GM12878 (cell line): ENCODE measurements at regions of chr1 and their contacts with region 1.

Region 1: GRCh38 chr1:90220941-90221693 is 226.2 kb downstream of the ZNF326 start:
- DNase-seq: no peak
- ATAC-seq: peak; percentile 49
- H3K4me3 ChIP-seq: no peak overlapping the region
- H3K27ac ChIP-seq: no peak overlapping the region
- H3K4me1 ChIP-seq: no peaks in the 10 kb centered on the region
- H3K27me3 ChIP-seq: no peaks in the 10 kb centered on the region
- CTCF ChIP-seq: no peak
- EP300 ChIP-seq: no peak
- POLR2A ChIP-seq: no peak
- RAD21 ChIP-seq: no peak

Region 2: GRCh38 chr1:90206260-90206659 is 14.9 kb before region 1 on chr1:
- CTCF ChIA-PET with region 1: no interaction called
- POLR2A ChIA-PET with region 1: no interaction called
- RAD21 ChIA-PET with region 1: interaction called, 4 read pairs
- SMC1A ChIA-PET with region 1: interaction called, 16 read pairs
- in situ Hi-C with region 1: no loop called
- intact Hi-C with region 1: no loop called
- DNase-seq: no peak
- ATAC-seq: no peak
- H3K4me3 ChIP-seq: no peak overlapping the region
- H3K27ac ChIP-seq: no peak overlapping the region
- H3K4me1 ChIP-seq: no peaks in the 10 kb centered on the region
- H3K27me3 ChIP-seq: no peaks in the 10 kb centered on the region
- CTCF ChIP-seq: no peak
- EP300 ChIP-seq: no peak
- POLR2A ChIP-seq: no peak
- RAD21 ChIP-seq: no peak

Region 3: GRCh38 chr1:90526954-90527353 is 305.8 kb after region 1 on chr1:
- CTCF ChIA-PET with region 1: no interaction called
- POLR2A ChIA-PET with region 1: no interaction called
- RAD21 ChIA-PET with region 1: no interaction called
- SMC1A ChIA-PET with region 1: no interaction called
- in situ Hi-C with region 1: no loop called
- intact Hi-C with region 1: no loop called
- DNase-seq: no peak
- ATAC-seq: peak; percentile 57
- H3K4me3 ChIP-seq: no peak overlapping the region
- H3K27ac ChIP-seq: no peak overlapping the region
- H3K4me1 ChIP-seq: no peaks in the 10 kb centered on the region
- H3K27me3 ChIP-seq: no peaks in the 10 kb centered on the region
- CTCF ChIP-seq: no peak
- EP300 ChIP-seq: no peak
- POLR2A ChIP-seq: no peak
- RAD21 ChIP-seq: no peak